Naive thymus-derived CD4-positive, alpha-beta T cell (primary cell): ENCODE measurements at regions of chr6 and their contacts with region 1.

Region 1: GRCh38 chr6:107957909-107958688 is at the start of gene SEC63:
- DNase-seq: peak; percentile 92 to 97 (median 96)
- ATAC-seq: peak; percentile 100
- H3K4me3 ChIP-seq: peak within 1 kb of the TSS; percentile 96
- H3K4me3 Mint-ChIP-seq: peak within 1 kb of the TSS; percentile 94 to 100 (median 99)
- H3K27ac ChIP-seq: peak within 1 kb of the TSS; percentile 86
- H3K27ac Mint-ChIP-seq: peak within 1 kb of the TSS; percentile 80 to 98 (median 96)
- H3K4me1 ChIP-seq: peaks cover 15 to 17% of the 10 kb centered on the region in 2 donors
- H3K4me1 Mint-ChIP-seq: peaks cover 20 to 35% (median 29%) of the 10 kb centered on the region in 7 donors
- H3K27me3 ChIP-seq: no peaks in the 10 kb centered on the region
- H3K27me3 Mint-ChIP-seq: peaks cover 0 to 5% (median 0%) of the 10 kb centered on the region in 5 donors
- total RNA-seq, gene SEC63: 82.9 to 89.0 (median 86.0) TPM

Region 2: GRCh38 chr6:106325336-106326178 is 1632.5 kb before region 1 on chr6 and contains the start of gene ATG5:
- CTCF ChIA-PET with region 1: no interaction called
- POLR2A ChIA-PET with region 1: interaction called, 5 read pairs
- intact Hi-C with region 1: loop called in 1 of 2 experiments (anchors 5 kb)
- DNase-seq: peak; percentile 99
- ATAC-seq: peak; percentile 98
- H3K4me3 ChIP-seq: peak within 1 kb of the TSS; percentile 99
- H3K4me3 Mint-ChIP-seq: peak within 1 kb of the TSS; percentile 96 to 100 (median 98)
- H3K27ac ChIP-seq: peak within 1 kb of the TSS; percentile 95
- H3K27ac Mint-ChIP-seq: peak within 1 kb of the TSS; percentile 95 to 100 (median 98)
- H3K4me1 ChIP-seq: peaks cover 16 to 24% of the 10 kb centered on the region in 2 donors
- H3K4me1 Mint-ChIP-seq: peaks cover 33 to 56% (median 46%) of the 10 kb centered on the region in 7 donors
- H3K27me3 ChIP-seq: no peaks in the 10 kb centered on the region
- H3K27me3 Mint-ChIP-seq: peaks cover 13 to 30% (median 17%) of the 10 kb centered on the region in 5 donors
- total RNA-seq, gene ATG5: 24.0 to 30.9 (median 27.0) TPM

Region 3: DNA sequence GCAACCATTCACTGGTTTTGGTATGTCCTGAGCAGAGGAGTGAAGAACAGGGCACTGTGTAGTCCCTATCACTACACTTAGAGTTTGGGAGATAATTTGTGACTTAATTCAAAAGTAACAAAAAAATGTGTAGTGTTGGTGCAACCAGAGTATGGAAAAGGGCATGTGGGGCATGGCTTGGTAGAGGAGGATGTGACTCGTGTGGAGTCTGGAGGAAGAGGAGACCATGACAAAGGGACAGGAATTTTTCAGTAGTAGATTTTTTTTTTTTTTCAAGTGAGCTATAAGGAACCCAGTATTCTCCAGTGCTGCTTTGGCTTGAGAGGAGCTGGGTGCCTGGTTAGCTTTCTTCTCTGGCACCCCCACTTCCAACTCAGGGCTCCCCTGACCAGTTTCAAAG is 925.0 kb before region 1 on chr6:
- CTCF ChIA-PET with region 1: no interaction called
- POLR2A ChIA-PET with region 1: no interaction called
- intact Hi-C with region 1: loop called (anchors 1 to 5 kb)
- DNase-seq: no peak
- ATAC-seq: no peak
- H3K4me3 ChIP-seq: no peak overlapping the region
- H3K4me3 Mint-ChIP-seq: no peak overlapping the region
- H3K27ac ChIP-seq: no peak overlapping the region
- H3K27ac Mint-ChIP-seq: peak overlapping the region in 1 of 9 donors; percentile 24
- H3K4me1 ChIP-seq: peaks cover 3 to 17% of the 10 kb centered on the region in 2 donors
- H3K4me1 Mint-ChIP-seq: peaks cover 22 to 56% (median 46%) of the 10 kb centered on the region in 7 donors
- H3K27me3 ChIP-seq: no peaks in the 10 kb centered on the region
- H3K27me3 Mint-ChIP-seq: no peaks in the 10 kb centered on the region

Region 4: GRCh38 chr6:107731422-107732319 is 226.4 kb before region 1 on chr6:
- CTCF ChIA-PET with region 1: no interaction called
- POLR2A ChIA-PET with region 1: no interaction called
- intact Hi-C with region 1: loop called in 1 of 2 experiments (anchors 5 kb)
- DNase-seq: peak in 7 of 9 donors; percentile 45 to 64 (median 58)
- ATAC-seq: peak; percentile 53
- H3K4me3 ChIP-seq: peak overlapping the region; percentile 68
- H3K4me3 Mint-ChIP-seq: peak overlapping the region; percentile 85 to 99 (median 97)
- H3K27ac ChIP-seq: peak overlapping the region; percentile 77
- H3K27ac Mint-ChIP-seq: peak overlapping the region; percentile 77 to 98 (median 95)
- H3K4me1 ChIP-seq: peaks cover 55 to 65% of the 10 kb centered on the region in 2 donors
- H3K4me1 Mint-ChIP-seq: peaks cover 56 to 86% (median 76%) of the 10 kb centered on the region in 7 donors
- H3K27me3 ChIP-seq: no peaks in the 10 kb centered on the region
- H3K27me3 Mint-ChIP-seq: peaks cover 0 to 13% (median 0%) of the 10 kb centered on the region in 5 donors

Region 5: DNA sequence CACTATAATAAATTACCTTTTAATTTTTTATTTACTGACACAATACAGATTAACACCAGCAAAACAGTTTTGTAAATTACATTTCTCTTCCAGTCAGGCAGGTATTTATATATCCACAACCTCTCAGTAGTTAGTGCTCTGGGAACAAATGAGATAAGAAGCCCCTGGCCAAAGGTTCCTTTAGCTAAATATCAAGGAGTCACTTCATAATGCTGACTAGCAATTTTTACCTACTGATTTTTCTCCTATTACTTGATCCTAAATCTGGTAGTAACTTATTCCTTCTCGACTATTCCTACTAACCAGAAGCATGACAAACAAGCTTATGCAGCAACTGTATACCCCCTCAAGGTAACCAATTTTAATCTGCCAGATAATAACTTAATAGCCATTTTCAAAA is 46.4 kb before region 1 on chr6:
- CTCF ChIA-PET with region 1: no interaction called
- POLR2A ChIA-PET with region 1: no interaction called
- intact Hi-C with region 1: loop called in 1 of 2 experiments (anchors 5 kb)
- DNase-seq: no peak
- ATAC-seq: no peak
- H3K4me3 ChIP-seq: no peak overlapping the region
- H3K4me3 Mint-ChIP-seq: no peak overlapping the region
- H3K27ac ChIP-seq: no peak overlapping the region
- H3K27ac Mint-ChIP-seq: no peak overlapping the region
- H3K4me1 ChIP-seq: no peaks in the 10 kb centered on the region
- H3K4me1 Mint-ChIP-seq: peaks cover 0 to 11% (median 4%) of the 10 kb centered on the region in 7 donors
- H3K27me3 ChIP-seq: no peaks in the 10 kb centered on the region
- H3K27me3 Mint-ChIP-seq: no peaks in the 10 kb centered on the region

Region 6: GRCh38 chr6:108097882-108098281 is 139.8 kb after region 1 on chr6:
- CTCF ChIA-PET with region 1: no interaction called
- POLR2A ChIA-PET with region 1: no interaction called
- intact Hi-C with region 1: no loop called
- DNase-seq: no peak
- ATAC-seq: no peak
- H3K4me3 ChIP-seq: no peak overlapping the region
- H3K4me3 Mint-ChIP-seq: no peak overlapping the region
- H3K27ac ChIP-seq: no peak overlapping the region
- H3K27ac Mint-ChIP-seq: no peak overlapping the region
- H3K4me1 ChIP-seq: no peaks in the 10 kb centered on the region
- H3K4me1 Mint-ChIP-seq: no peaks in the 10 kb centered on the region
- H3K27me3 ChIP-seq: no peaks in the 10 kb centered on the region
- H3K27me3 Mint-ChIP-seq: peaks cover 13 to 60% (median 36%) of the 10 kb centered on the region in 5 donors

Region 7: DNA sequence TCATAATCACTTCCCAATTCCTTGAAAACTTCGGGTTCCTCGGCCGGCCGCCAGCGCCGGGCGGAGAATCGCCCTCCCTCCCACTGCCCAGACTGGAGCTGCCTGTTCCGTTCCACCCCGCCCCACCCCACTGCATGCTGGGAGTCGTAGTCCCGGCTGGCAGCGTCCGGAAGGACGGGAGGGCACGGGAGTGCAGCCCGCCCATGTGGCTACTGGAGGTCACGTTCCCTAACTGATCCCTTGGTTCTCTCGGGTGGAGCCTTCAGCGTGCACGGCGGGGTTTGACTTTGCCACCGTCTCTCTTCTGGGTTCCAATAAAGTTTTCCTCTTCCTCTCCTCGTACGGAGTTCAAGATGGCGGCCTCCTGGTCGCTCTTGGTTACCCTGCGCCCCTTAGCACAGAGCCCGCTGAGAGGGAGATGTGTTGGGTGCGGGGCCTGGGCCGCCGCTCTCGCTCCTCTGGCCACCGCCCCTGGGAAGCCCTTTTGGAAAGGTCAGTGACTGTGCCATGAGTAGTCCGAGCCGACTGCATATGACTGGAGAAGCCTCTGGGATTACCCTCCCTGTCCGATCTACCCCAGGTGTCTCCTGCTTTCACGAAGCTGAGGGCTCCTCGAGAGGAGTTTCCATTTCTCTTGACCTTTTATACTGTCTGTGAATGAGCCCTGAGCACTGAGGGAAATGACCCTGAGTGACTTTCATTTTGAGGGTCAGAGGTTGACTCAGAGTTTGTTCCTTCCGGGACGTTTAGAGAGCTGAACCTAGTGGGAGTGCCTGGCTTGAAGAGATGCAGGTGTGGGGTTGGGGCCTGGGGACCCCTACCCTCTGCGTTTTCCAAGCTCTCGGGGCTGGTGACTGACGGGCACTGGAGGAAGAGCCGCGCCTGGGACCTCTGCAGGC is 336.9 kb after region 1 on chr6 and contains the start of gene AFG1L:
- CTCF ChIA-PET with region 1: no interaction called
- POLR2A ChIA-PET with region 1: no interaction called
- intact Hi-C with region 1: loop called (anchors 1 to 2 kb)
- DNase-seq: peak; percentile 81 to 90 (median 88)
- ATAC-seq: peak; percentile 96
- H3K4me3 ChIP-seq: peak within 1 kb of the TSS; percentile 99
- H3K4me3 Mint-ChIP-seq: peak within 1 kb of the TSS; percentile 93 to 99 (median 98)
- H3K27ac ChIP-seq: peak within 1 kb of the TSS; percentile 88
- H3K27ac Mint-ChIP-seq: peak within 1 kb of the TSS; percentile 95 to 100 (median 99)
- H3K4me1 ChIP-seq: peaks cover 10 to 13% of the 10 kb centered on the region in 2 donors
- H3K4me1 Mint-ChIP-seq: peaks cover 11 to 37% (median 26%) of the 10 kb centered on the region in 7 donors
- H3K27me3 ChIP-seq: no peaks in the 10 kb centered on the region
- H3K27me3 Mint-ChIP-seq: peaks cover 0 to 3% (median 0%) of the 10 kb centered on the region in 5 donors
- total RNA-seq, gene AFG1L: 4.1 to 9.2 (median 7.2) TPM

Region 8: GRCh38 chr6:109095027-109095834 is 1137.1 kb after region 1 on chr6 and contains the start of gene CEP57L1:
- CTCF ChIA-PET with region 1: no interaction called
- POLR2A ChIA-PET with region 1: no interaction called
- intact Hi-C with region 1: loop called (anchors 1 to 2 kb)
- DNase-seq: peak; percentile 88 to 96 (median 94)
- ATAC-seq: peak; percentile 81
- H3K4me3 ChIP-seq: peak within 1 kb of the TSS; percentile 96
- H3K4me3 Mint-ChIP-seq: peak within 1 kb of the TSS; percentile 92 to 98 (median 96)
- H3K27ac ChIP-seq: peak within 1 kb of the TSS; percentile 94
- H3K27ac Mint-ChIP-seq: peak within 1 kb of the TSS; percentile 98 to 99 (median 99)
- H3K4me1 ChIP-seq: peaks cover 21 to 29% of the 10 kb centered on the region in 2 donors
- H3K4me1 Mint-ChIP-seq: peaks cover 26 to 64% (median 54%) of the 10 kb centered on the region in 7 donors
- H3K27me3 ChIP-seq: no peaks in the 10 kb centered on the region
- H3K27me3 Mint-ChIP-seq: no peaks in the 10 kb centered on the region
- total RNA-seq, gene CEP57L1: 3.1 to 17.2 (median 6.5) TPM